Breast epithelium (tissue), 4 donors: ENCODE measurements at regions of chr7 and their contacts with region 1.

Region 1: DNA sequence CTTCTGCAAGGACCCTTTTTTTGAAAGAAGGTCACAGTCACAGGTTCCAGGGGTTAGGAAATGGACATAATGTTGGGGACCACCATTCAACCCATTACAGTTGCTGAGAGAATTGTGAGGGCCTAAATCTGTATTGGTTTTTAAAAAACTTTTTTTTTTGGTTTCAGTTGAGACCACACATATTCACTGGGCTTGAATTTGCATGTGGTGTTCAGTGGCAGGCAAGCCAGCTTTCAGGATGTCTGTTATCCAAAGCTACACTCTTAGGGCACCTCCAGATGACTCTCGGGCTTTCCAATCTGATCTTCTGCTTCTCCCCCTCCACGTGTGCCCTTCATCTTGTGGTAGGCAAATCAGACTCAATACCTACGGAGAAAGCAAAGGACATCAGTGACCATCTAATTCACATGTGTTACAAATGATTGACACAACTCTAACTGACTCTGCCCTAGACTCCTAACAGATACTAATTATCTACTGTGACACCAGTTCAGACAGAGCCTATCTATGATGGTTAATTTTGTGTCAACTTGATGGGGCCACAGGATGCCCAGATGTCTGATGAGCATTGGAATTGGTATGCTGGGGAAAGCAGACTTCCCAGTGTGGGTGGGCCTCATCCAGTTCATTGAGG is 93.3 kb upstream of the ELMO1 start:
- DNase-seq: no peak
- H3K4me3 ChIP-seq: no peak overlapping the region
- H3K27ac ChIP-seq: no peak overlapping the region
- H3K4me1 ChIP-seq: no peaks in the 10 kb centered on the region
- H3K27me3 ChIP-seq: no peaks in the 10 kb centered on the region
- CTCF ChIP-seq: no peak
- POLR2A ChIP-seq: no peak

Region 2: GRCh38 chr7:36999626-37000485 is 542.1 kb before region 1 on chr7:
- intact Hi-C with region 1: loop called (anchors 5 kb)
- DNase-seq: no peak
- H3K4me3 ChIP-seq: peak overlapping the region in 2 of 3 donors; percentile 12 to 19
- H3K27ac ChIP-seq: peak overlapping the region in 1 of 2 donors; percentile 34
- H3K4me1 ChIP-seq: no peaks in the 10 kb centered on the region
- H3K27me3 ChIP-seq: no peaks in the 10 kb centered on the region
- CTCF ChIP-seq: no peak
- POLR2A ChIP-seq: no peak

Region 3: DNA sequence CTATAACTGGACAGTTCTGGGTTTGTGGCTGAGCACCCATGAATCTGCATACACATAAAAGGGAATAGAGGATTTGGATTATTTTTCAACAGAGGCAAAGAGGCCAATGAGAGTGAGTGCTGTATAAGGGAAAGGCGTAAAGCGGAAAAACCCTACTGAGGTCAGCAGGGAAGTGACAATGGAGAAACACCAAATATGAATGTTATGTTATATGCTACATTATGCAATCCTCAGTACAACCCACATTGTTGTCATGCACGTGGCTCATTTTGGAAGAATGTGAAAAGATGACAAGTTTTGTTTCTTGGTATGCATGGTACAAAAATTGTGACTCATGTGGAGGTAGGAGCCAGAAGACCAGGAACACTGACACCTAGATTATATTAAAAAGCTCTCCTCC is 1202.8 kb after region 1 on chr7:
- intact Hi-C with region 1: no loop called
- DNase-seq: no peak
- H3K4me3 ChIP-seq: no peak overlapping the region
- H3K27ac ChIP-seq: no peak overlapping the region
- H3K4me1 ChIP-seq: no peaks in the 10 kb centered on the region
- H3K27me3 ChIP-seq: no peaks in the 10 kb centered on the region
- CTCF ChIP-seq: no peak
- POLR2A ChIP-seq: no peak